PC-9 (cell line): ENCODE measurements at regions of chr3 and their contacts with region 1.

Region 1: DNA sequence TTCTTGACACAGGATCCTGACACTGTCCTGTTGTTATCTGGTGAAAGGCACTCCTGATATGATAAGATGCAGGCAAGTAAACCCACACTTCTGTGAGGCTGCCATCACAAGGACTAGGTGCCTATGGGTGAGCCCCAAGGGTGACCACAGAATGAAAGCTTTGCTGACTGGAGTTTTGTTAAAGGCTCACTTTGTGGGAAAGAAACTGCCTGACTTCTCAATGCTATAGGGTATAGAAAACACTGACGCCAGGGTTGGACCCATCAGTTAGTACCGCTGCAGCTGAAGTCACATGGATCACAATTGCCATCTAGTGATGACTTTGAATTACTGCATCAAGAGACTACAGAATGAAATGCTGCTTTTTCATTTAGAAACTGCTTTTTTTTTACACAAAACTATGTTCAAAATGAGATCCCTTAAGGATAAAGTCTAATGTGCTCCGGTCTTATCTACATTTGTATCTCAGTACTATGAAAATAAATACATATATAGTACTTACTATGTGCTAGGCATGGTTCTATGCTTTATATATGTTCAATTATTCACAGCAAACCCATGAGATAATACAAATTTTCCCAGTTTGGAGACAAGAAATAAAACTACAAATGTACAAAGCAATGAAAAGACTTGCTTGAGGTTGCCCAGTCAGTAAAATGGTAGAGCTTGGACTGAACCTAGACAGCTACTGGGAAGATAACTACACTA is 64.2 kb upstream of the CMSS1 start:
- DNase-seq: peak; percentile 39 to 50
- H3K4me3 ChIP-seq: no peak overlapping the region
- H3K27ac ChIP-seq: no peak overlapping the region
- H3K4me1 ChIP-seq: no peaks in the 10 kb centered on the region
- H3K27me3 ChIP-seq: peaks cover 9% of the 10 kb centered on the region; the same call in 1 of the 2 replicates
- CTCF ChIP-seq: peak; percentile 96

Region 2: GRCh38 chr3:98329392-98330124 is 1423.9 kb before region 1 on chr3:
- CTCF ChIA-PET with region 1: no interaction called
- POLR2A ChIA-PET with region 1: no interaction called
- intact Hi-C with region 1: loop called (anchors 5 kb)
- DNase-seq: peak; percentile 44 to 46
- H3K4me3 ChIP-seq: no peak overlapping the region
- H3K27ac ChIP-seq: no peak overlapping the region
- H3K4me1 ChIP-seq: no peaks in the 10 kb centered on the region
- H3K27me3 ChIP-seq: no peaks in the 10 kb centered on the region
- CTCF ChIP-seq: peak; percentile 91

Region 3: GRCh38 chr3:98930413-98930812 is 823.0 kb before region 1 on chr3:
- CTCF ChIA-PET with region 1: interaction called, 12 read pairs
- POLR2A ChIA-PET with region 1: no interaction called
- intact Hi-C with region 1: no loop called
- DNase-seq: no peak
- H3K4me3 ChIP-seq: no peak overlapping the region
- H3K27ac ChIP-seq: no peak overlapping the region
- H3K4me1 ChIP-seq: no peaks in the 10 kb centered on the region
- H3K27me3 ChIP-seq: no peaks in the 10 kb centered on the region
- CTCF ChIP-seq: no peak

Region 4: DNA sequence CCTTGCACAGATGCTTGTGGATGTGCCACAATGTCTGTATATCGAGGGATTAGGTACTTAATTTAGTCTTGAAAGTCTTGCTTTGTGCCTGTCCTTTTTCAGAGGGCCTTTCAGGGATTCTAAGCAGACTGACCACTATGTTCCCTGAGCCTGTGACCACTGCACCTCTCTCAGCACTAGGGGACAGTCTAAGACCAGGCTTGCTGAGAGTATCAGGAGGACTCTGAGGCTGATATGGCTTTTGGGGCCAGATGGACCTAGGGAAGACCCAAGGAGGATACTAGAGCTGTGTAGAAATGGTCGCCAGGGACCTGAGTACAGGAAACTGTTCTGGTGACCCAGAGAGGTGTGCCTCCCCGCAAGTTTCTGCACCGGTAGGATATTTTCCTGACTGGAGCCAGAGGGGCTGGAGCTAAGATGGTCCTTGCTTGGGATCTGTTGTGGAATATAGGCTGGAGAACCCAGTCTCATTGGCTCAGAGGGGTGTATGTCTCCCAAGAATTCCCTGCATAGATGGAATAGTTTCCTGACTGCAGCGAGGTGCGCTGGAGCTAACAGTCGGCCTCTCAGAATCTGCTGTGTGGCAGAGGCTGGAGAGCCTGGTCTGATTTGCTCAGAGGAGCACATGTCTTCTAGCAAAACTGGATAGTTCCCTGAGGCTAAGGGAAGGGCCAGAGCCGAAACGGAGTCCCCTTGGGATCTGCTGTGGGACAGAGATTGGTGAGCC is 638.7 kb before region 1 on chr3:
- CTCF ChIA-PET with region 1: interaction called, 5 read pairs
- POLR2A ChIA-PET with region 1: no interaction called
- intact Hi-C with region 1: loop called (anchors 1 kb)
- DNase-seq: peak in 1 of 2 experiments; percentile 19
- H3K4me3 ChIP-seq: no peak overlapping the region
- H3K27ac ChIP-seq: no peak overlapping the region
- H3K4me1 ChIP-seq: no peaks in the 10 kb centered on the region
- H3K27me3 ChIP-seq: no peaks in the 10 kb centered on the region
- CTCF ChIP-seq: peak; percentile 91

Region 5: GRCh38 chr3:99394831-99395778 is 358.3 kb before region 1 on chr3:
- CTCF ChIA-PET with region 1: no interaction called
- POLR2A ChIA-PET with region 1: no interaction called
- intact Hi-C with region 1: loop called (anchors 10 kb)
- DNase-seq: peak in 1 of 2 experiments; percentile 66
- H3K4me3 ChIP-seq: no peak overlapping the region
- H3K27ac ChIP-seq: peak overlapping the region; percentile 24; the same call in 1 of the 2 replicates
- H3K4me1 ChIP-seq: peaks cover 10% of the 10 kb centered on the region
- H3K27me3 ChIP-seq: no peaks in the 10 kb centered on the region
- CTCF ChIP-seq: no peak

Region 6: GRCh38 chr3:99551520-99551919 is 201.9 kb before region 1 on chr3:
- CTCF ChIA-PET with region 1: no interaction called
- POLR2A ChIA-PET with region 1: no interaction called
- intact Hi-C with region 1: no loop called
- DNase-seq: no peak
- H3K4me3 ChIP-seq: no peak overlapping the region
- H3K27ac ChIP-seq: no peak overlapping the region
- H3K4me1 ChIP-seq: peaks cover 9% of the 10 kb centered on the region
- H3K27me3 ChIP-seq: no peaks in the 10 kb centered on the region
- CTCF ChIP-seq: peak; percentile 48